CD4-positive, alpha-beta T cell (primary cell): ENCODE measurements at regions of chr3 and their contacts with region 1.

Region 1: GRCh38 chr3:136752422-136753325 is 496 bp upstream of the STAG1 start:
- DNase-seq: peak; percentile 96 to 100 (median 99)
- ATAC-seq: peak; percentile 79
- H3K4me3 ChIP-seq: peak overlapping the region; percentile 90
- H3K4me3 Mint-ChIP-seq: peak overlapping the region; percentile 99
- H3K27ac ChIP-seq: peak overlapping the region; percentile 98 to 99
- H3K27ac Mint-ChIP-seq: peak overlapping the region; percentile 97
- H3K4me1 ChIP-seq: peaks cover 33% of the 10 kb centered on the region
- H3K4me1 Mint-ChIP-seq: peaks cover 46% of the 10 kb centered on the region
- H3K27me3 ChIP-seq: no peaks in the 10 kb centered on the region
- H3K27me3 Mint-ChIP-seq: no peaks in the 10 kb centered on the region
- CTCF ChIP-seq: peak; percentile 28

Region 2: DNA sequence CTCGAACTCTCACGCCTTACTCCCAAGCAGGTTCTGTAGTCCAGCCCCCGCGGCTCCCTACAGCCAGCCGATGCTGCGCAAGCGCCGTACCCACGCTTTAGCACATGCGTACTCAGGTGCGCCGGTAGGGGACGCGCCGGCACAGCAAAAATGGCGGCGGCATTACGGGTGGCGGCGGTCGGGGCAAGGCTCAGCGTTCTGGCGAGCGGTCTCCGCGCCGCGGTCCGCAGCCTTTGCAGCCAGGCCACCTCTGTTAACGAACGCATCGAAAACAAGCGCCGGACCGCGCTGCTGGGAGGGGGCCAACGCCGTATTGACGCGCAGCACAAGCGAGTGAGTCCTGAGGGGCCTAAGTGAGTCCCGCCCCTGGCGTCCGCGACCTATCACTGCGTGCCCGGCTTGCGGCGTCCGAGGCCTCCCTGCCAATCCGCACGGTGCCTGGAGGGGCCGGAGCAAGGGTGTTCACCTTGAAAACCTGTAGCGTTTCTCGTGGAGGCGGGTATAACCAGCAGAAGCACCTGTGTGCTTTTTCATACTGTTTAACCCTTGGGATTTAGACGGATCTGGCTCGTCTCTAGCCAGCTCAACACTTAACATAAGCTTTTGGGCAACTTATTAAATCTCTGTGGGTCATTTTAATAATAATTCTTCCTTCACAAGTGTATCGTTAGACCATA is 502.3 kb before region 1 on chr3 and contains the start of gene PCCB:
- CTCF ChIA-PET with region 1: interaction called, 7 read pairs
- POLR2A ChIA-PET with region 1: interaction called, 15 read pairs
- intact Hi-C with region 1: loop called (anchors 2 to 10 kb)
- DNase-seq: peak; percentile 85 to 96 (median 90)
- ATAC-seq: peak; percentile 95
- H3K4me3 ChIP-seq: peak within 1 kb of the TSS; percentile 63
- H3K4me3 Mint-ChIP-seq: peak within 1 kb of the TSS; percentile 91
- H3K27ac ChIP-seq: peak within 1 kb of the TSS; percentile 72 to 78
- H3K27ac Mint-ChIP-seq: peak within 1 kb of the TSS; percentile 85
- H3K4me1 ChIP-seq: peaks cover 23% of the 10 kb centered on the region
- H3K4me1 Mint-ChIP-seq: peaks cover 23% of the 10 kb centered on the region
- H3K27me3 ChIP-seq: no peaks in the 10 kb centered on the region
- H3K27me3 Mint-ChIP-seq: no peaks in the 10 kb centered on the region
- CTCF ChIP-seq: peak; percentile 89
- total RNA-seq, gene PCCB: 8.3 to 10.2 TPM

Region 3: DNA sequence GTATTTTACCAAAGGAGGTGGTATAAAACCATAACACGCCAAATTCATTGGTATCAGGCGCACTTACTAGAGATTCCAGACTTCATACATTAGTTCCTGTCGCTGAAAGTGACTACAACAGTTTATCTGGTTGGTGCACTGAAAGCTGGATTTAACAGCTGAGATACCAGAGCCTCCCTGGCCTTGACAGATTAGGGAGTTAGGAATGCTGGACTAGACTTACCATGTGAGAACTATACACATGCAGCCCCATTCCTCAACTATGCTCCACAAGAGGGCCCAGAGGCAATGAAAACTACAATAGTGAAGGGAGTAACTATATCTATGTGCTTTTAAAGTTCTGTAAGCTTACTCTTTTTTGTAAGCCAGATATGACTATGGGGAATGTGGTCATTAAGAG is 174.9 kb before region 1 on chr3:
- CTCF ChIA-PET with region 1: interaction called, 10 read pairs
- POLR2A ChIA-PET with region 1: interaction called, 5 read pairs
- intact Hi-C with region 1: no loop called
- DNase-seq: peak in 1 of 14 experiments; percentile 2
- ATAC-seq: no peak
- H3K4me3 ChIP-seq: no peak overlapping the region
- H3K4me3 Mint-ChIP-seq: no peak overlapping the region
- H3K27ac ChIP-seq: no peak overlapping the region
- H3K27ac Mint-ChIP-seq: no peak overlapping the region
- H3K4me1 ChIP-seq: no peaks in the 10 kb centered on the region
- H3K4me1 Mint-ChIP-seq: no peaks in the 10 kb centered on the region
- H3K27me3 ChIP-seq: no peaks in the 10 kb centered on the region
- H3K27me3 Mint-ChIP-seq: no peaks in the 10 kb centered on the region
- CTCF ChIP-seq: no peak

Region 4: GRCh38 chr3:136682740-136683312 is 69.8 kb before region 1 on chr3:
- CTCF ChIA-PET with region 1: no interaction called
- POLR2A ChIA-PET with region 1: no interaction called
- intact Hi-C with region 1: no loop called
- DNase-seq: no peak
- ATAC-seq: no peak
- H3K4me3 ChIP-seq: no peak overlapping the region
- H3K4me3 Mint-ChIP-seq: no peak overlapping the region
- H3K27ac ChIP-seq: no peak overlapping the region
- H3K27ac Mint-ChIP-seq: no peak overlapping the region
- H3K4me1 ChIP-seq: no peaks in the 10 kb centered on the region
- H3K4me1 Mint-ChIP-seq: peaks cover 50% of the 10 kb centered on the region
- H3K27me3 ChIP-seq: no peaks in the 10 kb centered on the region
- H3K27me3 Mint-ChIP-seq: no peaks in the 10 kb centered on the region
- CTCF ChIP-seq: no peak

Region 5: DNA sequence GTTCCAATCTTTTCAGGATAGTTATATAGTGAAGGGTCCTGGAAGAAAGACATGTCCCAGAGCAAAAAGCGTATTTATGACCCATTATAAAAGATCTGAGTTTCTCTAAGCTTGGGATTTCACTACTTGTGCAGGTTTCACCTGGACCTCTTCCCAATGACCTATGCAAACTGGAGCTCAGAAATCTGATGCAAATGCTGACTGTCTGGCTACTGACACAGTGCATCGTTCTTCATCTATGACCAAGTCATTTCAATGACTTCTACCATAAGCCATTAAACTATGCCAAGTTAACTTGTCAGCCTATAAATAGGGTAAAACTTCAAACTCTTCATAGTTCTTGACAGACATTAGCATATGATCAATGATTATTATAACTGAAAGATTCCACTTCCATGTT is 11.6 kb before region 1 on chr3:
- CTCF ChIA-PET with region 1: interaction called, 19 read pairs
- POLR2A ChIA-PET with region 1: interaction called, 20 read pairs
- intact Hi-C with region 1: no loop called
- DNase-seq: no peak
- ATAC-seq: no peak
- H3K4me3 ChIP-seq: no peak overlapping the region
- H3K4me3 Mint-ChIP-seq: no peak overlapping the region
- H3K27ac ChIP-seq: no peak overlapping the region
- H3K27ac Mint-ChIP-seq: no peak overlapping the region
- H3K4me1 ChIP-seq: peaks cover 11% of the 10 kb centered on the region
- H3K4me1 Mint-ChIP-seq: peaks cover 51% of the 10 kb centered on the region
- H3K27me3 ChIP-seq: no peaks in the 10 kb centered on the region
- H3K27me3 Mint-ChIP-seq: no peaks in the 10 kb centered on the region
- CTCF ChIP-seq: no peak

Region 6: DNA sequence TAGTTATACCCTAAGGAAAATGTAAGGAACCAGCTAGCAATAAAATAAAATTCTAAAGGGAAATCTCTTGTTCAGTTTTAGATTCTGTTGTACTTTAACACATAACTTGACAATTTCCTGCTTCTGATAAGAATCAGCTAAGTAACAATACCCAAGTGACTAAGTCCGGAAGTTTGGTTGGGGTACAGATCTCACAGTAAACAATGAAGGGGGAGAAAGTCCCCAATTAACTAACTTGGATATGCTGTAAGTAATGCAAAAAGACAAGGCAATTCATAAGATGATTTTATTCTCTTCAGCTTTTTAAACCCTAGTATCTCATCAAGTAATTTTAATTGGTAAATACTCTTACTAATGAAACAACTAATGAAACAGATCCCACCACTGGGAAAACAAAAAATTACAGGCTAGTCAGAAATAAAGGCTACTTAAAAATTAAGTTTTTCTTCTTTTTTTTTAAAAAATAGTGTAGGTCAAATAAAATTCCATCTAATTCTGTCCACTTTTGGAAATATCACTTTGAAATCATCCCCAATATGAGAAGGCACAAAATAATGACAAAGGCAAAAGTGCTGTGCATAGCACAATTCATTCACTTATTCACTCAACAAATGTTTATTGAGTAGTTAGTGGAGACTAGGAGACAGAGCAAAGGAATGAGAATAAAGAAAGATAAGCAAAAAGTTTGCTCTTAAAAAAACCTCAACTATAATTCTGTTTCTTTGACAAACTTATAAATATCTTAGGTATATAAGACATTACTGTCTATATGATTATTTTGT is 167.3 kb after region 1 on chr3:
- CTCF ChIA-PET with region 1: interaction called, 12 read pairs
- POLR2A ChIA-PET with region 1: interaction called, 16 read pairs
- intact Hi-C with region 1: loop called in 1 of 2 experiments (anchors 10 kb)
- DNase-seq: peak in 5 of 14 experiments; percentile 4 to 85 (median 79)
- ATAC-seq: peak; percentile 93
- H3K4me3 ChIP-seq: peak overlapping the region; percentile 1
- H3K4me3 Mint-ChIP-seq: peak overlapping the region; percentile 43
- H3K27ac ChIP-seq: peak overlapping the region; percentile 39 to 54
- H3K27ac Mint-ChIP-seq: peak overlapping the region; percentile 76
- H3K4me1 ChIP-seq: peaks cover 23% of the 10 kb centered on the region
- H3K4me1 Mint-ChIP-seq: peaks cover 88% of the 10 kb centered on the region
- H3K27me3 ChIP-seq: no peaks in the 10 kb centered on the region
- H3K27me3 Mint-ChIP-seq: no peaks in the 10 kb centered on the region
- CTCF ChIP-seq: no peak

Region 7: DNA sequence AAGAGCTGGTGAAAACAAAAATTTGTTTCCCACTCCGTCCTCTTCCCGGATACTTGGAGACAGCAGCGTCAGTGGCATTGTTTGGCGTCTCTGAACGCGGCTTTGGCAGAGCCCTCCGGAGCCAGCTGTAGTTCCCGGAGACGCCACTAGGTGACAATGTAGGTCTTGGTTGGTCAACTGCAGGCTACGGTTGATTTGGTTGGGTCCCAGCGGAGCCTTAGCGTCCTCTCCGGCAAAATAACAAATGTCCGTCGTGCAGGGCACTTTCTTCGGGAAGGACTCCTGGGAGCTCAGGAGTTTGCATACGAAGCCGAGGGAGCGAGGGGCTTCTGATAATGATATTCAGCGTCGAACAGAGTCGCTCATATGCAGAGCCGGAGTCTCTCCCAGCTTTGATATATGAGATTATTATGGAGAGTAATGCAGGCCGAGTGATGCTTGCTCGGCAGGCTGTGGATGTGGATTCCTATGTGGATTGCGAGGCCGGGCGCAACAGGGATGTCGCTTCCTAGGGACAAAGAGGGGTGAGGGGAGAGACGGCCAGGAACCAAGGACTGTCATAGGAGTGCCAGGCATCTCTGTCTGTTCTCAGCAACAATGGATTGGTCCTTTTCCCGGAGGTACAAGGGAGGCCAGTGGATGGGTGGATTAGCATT is 279.9 kb after region 1 on chr3:
- CTCF ChIA-PET with region 1: interaction called, 11 read pairs
- POLR2A ChIA-PET with region 1: interaction called, 6 read pairs
- intact Hi-C with region 1: no loop called
- DNase-seq: peak; percentile 52 to 85 (median 66)
- ATAC-seq: peak; percentile 81
- H3K4me3 ChIP-seq: peak overlapping the region; percentile 28
- H3K4me3 Mint-ChIP-seq: peak overlapping the region; percentile 71
- H3K27ac ChIP-seq: no peak overlapping the region
- H3K27ac Mint-ChIP-seq: no peak overlapping the region
- H3K4me1 ChIP-seq: peaks cover 8% of the 10 kb centered on the region
- H3K4me1 Mint-ChIP-seq: peaks cover 9% of the 10 kb centered on the region
- H3K27me3 ChIP-seq: peaks cover 5 to 20% of the 10 kb centered on the region in 2 experiments
- H3K27me3 Mint-ChIP-seq: peaks cover 38% of the 10 kb centered on the region
- CTCF ChIP-seq: peak; percentile 99